ENCODE measurements at regions of chr6 and their contacts with region 1.

Region 1: DNA sequence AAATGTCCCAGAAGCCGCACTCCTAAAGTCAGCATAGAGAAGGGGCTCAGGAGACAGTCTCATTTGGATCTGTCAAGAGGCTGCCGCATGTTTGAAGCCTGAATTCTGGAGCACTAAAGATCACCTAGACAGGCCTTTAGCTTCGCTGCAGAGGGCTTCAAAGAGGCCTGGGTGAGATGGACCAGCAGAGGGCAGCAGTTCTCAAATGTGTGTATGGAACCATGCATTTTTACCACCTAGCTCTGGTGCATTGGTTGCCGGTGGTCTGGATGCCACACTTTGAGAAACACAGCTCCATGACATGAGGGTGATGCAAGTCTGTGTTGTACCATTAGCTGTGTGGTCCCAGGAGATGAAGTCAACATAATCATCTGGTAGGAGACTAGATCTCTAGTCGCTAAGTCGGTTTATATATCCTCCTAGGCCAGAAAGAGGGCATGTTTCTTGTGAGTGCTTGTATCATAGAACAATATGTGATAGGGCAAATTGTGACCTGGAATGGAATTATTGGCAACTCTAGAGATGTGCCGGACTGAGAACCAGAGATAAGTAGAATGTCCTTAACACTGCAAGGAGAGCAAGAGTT is 64.8 kb downstream of the KIAA0319 start:
- DNase-seq: peak; percentile 57 to 75 (median 73)
- H3K4me3 ChIP-seq: no peak overlapping the region
- H3K27ac ChIP-seq: no peak overlapping the region
- H3K4me1 ChIP-seq: no peaks in the 10 kb centered on the region
- H3K27me3 ChIP-seq: no peaks in the 10 kb centered on the region
- CTCF ChIP-seq: peak; percentile 27 to 45 (median 35)
- EP300 ChIP-seq: no peak
- POLR2A ChIP-seq: no peak

Region 2: DNA sequence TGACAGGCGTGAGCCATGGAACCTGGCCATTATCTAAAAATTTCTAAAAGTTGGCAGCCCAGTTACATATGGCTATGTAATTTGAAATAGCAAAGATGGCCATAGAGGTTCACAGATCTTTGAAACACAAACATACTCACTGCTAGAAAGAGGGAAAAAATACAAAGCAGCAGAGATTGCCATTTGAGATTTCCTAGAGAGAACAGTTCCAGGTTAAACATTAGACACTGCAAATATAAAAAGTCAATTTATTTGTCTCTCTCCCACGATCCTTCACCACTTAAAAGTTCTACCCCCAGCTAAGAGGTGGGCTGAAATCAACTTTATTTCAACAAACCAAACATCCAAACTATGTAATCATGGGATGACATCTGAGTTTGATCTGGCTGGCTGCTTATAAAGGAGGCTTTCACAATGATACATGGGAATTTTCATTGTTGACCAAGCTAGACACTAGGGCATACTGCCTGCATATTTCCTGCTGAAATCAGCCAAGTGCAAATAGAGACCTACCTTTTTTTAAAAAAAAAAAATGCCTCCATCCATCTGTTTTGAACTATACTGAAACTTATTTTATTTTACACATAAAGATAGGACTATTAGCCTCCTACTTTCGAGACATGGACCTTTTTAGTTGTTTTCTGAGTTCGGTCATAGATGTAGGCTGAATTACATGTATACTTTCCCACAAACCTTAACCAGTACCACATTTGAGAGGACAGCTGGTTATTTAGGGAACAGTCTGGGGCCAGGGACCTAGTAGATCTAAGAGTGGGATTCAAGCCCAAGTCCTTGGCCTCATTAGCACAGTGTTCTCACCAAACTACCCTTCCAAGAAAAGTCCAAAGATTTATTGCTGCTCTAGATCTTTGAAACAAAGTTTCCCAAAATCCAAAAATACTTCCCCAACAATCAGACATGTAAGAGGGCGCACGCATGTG is 239.9 kb before region 1 on chr6:
- intact Hi-C with region 1: no loop called
- DNase-seq: no peak
- H3K4me3 ChIP-seq: no peak overlapping the region
- H3K27ac ChIP-seq: no peak overlapping the region
- H3K4me1 ChIP-seq: no peaks in the 10 kb centered on the region
- H3K27me3 ChIP-seq: no peaks in the 10 kb centered on the region
- CTCF ChIP-seq: no peak
- EP300 ChIP-seq: no peak
- POLR2A ChIP-seq: no peak

Region 3: DNA sequence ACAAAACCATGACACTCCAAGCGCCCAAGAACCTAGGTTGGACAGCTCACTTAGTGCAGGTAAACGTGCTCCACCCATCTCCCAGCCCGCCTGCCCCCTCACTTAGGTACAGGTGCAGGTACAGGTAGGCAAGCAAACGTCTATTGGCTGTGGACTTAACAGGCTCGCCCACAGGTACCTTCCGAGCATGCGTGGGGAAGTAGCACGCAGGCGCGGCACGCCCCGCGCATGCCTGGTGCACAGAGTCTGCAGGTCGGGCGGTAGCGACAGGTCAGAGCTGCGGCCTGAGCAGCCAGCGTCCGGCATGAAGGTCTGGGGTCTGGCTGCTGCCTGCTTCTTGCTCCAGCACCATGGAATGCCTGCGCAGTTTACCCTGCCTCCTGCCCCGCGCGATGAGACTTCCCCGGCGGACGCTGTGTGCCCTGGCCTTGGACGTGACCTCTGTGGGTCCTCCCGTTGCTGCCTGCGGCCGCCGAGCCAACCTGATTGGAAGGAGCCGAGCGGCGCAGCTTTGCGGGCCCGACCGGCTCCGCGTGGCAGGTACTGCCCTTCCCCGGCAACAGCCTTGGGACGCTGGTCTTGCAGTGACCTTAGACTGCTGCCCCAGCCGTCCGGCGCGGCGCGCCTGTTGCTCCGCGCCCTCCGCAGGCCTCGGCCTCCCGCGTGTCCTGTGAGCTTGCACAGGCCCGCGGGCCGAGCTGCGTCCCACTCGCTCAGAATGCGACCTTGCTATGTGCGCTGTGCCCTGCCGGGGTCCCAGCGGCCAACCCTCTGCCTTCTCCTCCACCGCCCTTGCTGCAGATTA is 178.3 kb before region 1 on chr6 and contains the start of gene MRS2:
- intact Hi-C with region 1: no loop called
- DNase-seq: peak; percentile 74 to 86 (median 80)
- H3K4me3 ChIP-seq: peak within 1 kb of the TSS; percentile 50
- H3K27ac ChIP-seq: peak within 1 kb of the TSS; percentile 49 to 70
- H3K4me1 ChIP-seq: peaks cover 5% of the 10 kb centered on the region
- H3K27me3 ChIP-seq: no peaks in the 10 kb centered on the region
- CTCF ChIP-seq: no peak
- EP300 ChIP-seq: no peak
- POLR2A ChIP-seq: no peak
- total RNA-seq, gene MRS2: 13.7 to 20.6 (median 16.4) TPM

Region 4: GRCh38 chr6:24689964-24690363 is 108.8 kb after region 1 on chr6:
- intact Hi-C with region 1: loop called in 2 of 4 experiments (anchors 10 kb)
- DNase-seq: no peak
- H3K4me3 ChIP-seq: no peak overlapping the region
- H3K27ac ChIP-seq: no peak overlapping the region
- H3K4me1 ChIP-seq: no peaks in the 10 kb centered on the region
- H3K27me3 ChIP-seq: no peaks in the 10 kb centered on the region
- CTCF ChIP-seq: no peak
- EP300 ChIP-seq: no peak
- POLR2A ChIP-seq: no peak

Region 5: DNA sequence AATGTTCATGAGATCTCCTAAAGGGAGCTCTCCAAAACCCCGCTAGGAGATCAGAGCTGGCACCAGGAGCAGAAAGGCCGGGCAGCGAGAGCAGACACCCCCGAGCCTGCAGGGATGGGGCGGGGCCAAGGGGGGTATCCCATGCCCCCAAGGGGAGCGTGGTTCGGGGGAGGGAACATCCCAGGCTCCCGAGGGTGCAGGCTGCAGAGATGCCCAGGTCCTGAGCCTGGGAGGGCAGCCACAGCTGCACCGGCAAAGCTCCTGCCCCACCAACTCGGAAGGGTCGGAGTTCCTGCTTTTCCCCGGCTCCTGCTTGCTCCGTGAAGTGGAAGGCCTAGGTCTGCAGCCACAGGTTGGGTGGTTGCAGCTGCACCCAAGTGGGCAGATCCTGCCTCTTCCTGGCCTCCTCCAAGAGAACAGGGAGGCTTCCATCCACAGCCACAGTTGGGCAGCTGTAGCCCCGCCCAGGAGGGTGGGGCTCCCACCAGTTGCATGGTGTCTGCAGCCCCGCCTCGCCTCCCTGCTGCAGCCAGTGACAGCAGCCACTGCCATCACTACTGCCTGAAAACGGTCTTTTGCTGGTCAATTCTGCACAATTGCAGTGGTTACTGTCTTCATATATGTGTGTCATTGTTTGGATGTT is 180.1 kb after region 1 on chr6:
- intact Hi-C with region 1: loop called (anchors 5 to 10 kb)
- DNase-seq: no peak
- H3K4me3 ChIP-seq: no peak overlapping the region
- H3K27ac ChIP-seq: no peak overlapping the region
- H3K4me1 ChIP-seq: peaks cover 2% of the 10 kb centered on the region
- H3K27me3 ChIP-seq: no peaks in the 10 kb centered on the region
- CTCF ChIP-seq: no peak
- EP300 ChIP-seq: no peak
- POLR2A ChIP-seq: no peak

Region 6: DNA sequence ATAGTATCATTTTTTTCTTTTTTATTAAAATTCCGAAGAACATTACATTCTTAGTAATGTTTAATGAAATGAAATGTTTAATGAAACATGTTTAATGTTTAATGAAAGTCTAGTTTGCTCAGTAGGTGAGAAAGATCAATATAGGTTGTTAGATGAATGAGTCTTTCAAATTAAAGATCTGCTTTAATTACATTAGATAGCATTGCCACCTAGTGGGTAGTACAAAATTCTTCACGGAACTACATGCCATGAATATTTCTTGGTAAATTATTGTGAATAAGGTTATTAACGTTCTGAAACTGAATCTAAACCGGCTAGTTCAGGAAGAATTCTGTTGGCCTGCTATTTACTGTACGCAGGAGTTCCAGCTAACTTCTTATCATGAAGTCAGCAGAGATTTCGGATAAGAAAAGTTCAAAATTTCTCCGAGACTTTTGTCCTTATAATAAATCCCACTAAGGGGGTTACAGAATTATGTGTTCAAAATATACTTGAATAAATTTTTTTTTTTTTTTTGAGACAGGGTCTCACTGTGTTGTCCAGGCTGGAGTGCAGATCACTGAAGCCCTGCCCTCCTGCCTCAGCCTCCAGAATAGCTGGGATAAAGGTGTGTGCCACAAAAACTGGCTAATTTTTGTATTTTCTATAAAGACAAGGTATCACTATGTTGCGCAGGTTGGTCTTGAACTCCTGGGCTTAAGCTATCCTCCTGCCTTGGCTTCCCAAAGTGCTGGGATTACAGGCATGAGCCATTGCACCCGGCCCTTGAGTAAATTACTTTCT is 185.7 kb after region 1 on chr6:
- intact Hi-C with region 1: loop called (anchors 5 to 10 kb)
- DNase-seq: no peak
- H3K4me3 ChIP-seq: no peak overlapping the region
- H3K27ac ChIP-seq: no peak overlapping the region
- H3K4me1 ChIP-seq: no peaks in the 10 kb centered on the region
- H3K27me3 ChIP-seq: no peaks in the 10 kb centered on the region
- CTCF ChIP-seq: peak in 2 of 3 donors; percentile 11 to 21
- EP300 ChIP-seq: no peak
- POLR2A ChIP-seq: no peak

Region 7: GRCh38 chr6:24899997-24900325 is 318.8 kb after region 1 on chr6:
- intact Hi-C with region 1: no loop called
- DNase-seq: no peak
- H3K4me3 ChIP-seq: no peak overlapping the region
- H3K27ac ChIP-seq: no peak overlapping the region
- H3K4me1 ChIP-seq: no peaks in the 10 kb centered on the region
- H3K27me3 ChIP-seq: no peaks in the 10 kb centered on the region
- CTCF ChIP-seq: no peak
- EP300 ChIP-seq: no peak
- POLR2A ChIP-seq: no peak

Measured in ovary (tissue), 10 donors.